ENCODE measurements at regions of chr10 and their contacts with region 1.

Region 1: GRCh38 chr10:64271983-64272382 is 750.8 kb downstream of the REEP3 start:
- DNase-seq: peak in 1 of 2 experiments; percentile 16
- H3K4me3 ChIP-seq: no peak overlapping the region
- H3K4me3 Mint-ChIP-seq: no peak overlapping the region
- H3K27ac Mint-ChIP-seq: no peak overlapping the region
- H3K4me1 ChIP-seq: no peaks in the 10 kb centered on the region
- H3K4me1 Mint-ChIP-seq: no peaks in the 10 kb centered on the region
- H3K27me3 ChIP-seq: no peaks in the 10 kb centered on the region
- H3K27me3 Mint-ChIP-seq: peaks cover 7% of the 10 kb centered on the region
- CTCF ChIP-seq: peak; percentile 42 to 46

Region 2: DNA sequence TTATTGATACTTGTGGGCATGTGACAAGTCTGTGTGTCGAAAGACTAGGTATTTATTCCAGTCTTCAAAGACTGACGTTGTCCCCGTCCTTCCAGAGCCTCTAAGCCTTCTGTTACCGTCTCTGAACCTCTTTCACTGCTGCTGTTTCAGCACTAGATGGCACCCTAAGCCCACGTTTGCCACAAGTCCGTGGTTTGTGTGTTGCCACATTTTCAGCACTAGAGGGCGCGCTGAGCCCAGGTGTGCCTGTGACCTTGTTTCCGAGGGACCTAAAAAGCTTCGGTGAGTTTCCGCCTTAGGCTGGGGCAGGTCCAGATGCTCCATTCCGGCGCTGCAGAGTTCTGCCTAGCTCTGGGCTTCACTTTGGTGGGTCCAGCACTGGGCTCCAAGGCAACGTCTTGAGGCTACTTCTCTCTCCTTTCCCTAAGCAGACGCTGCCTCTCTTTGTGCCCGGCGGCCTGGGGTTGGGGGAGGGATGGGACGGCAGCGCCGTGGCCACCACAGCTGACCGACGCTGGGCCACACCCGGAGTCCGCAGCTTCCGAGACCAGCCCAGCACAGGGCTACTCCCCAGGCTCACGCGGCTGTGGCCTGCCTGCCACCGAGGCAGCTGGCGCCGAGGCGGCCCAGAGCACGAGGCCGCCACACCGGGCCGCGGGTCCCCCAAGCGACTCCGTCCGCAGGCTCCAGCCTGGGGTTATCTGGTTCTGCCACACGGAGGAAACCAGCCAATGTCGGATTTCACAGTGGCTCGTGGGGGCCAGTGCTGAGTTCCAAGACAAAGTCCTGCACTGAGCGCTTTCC is 230.6 kb before region 1 on chr10:
- CTCF ChIA-PET with region 1: no interaction called
- POLR2A ChIA-PET with region 1: no interaction called
- intact Hi-C with region 1: no loop called
- DNase-seq: peak; percentile 84 to 90
- H3K4me3 ChIP-seq: no peak overlapping the region
- H3K4me3 Mint-ChIP-seq: no peak overlapping the region
- H3K27ac Mint-ChIP-seq: no peak overlapping the region
- H3K4me1 ChIP-seq: no peaks in the 10 kb centered on the region
- H3K4me1 Mint-ChIP-seq: no peaks in the 10 kb centered on the region
- H3K27me3 ChIP-seq: no peaks in the 10 kb centered on the region; the same call in 1 of the 2 replicates
- H3K27me3 Mint-ChIP-seq: peaks cover 6% of the 10 kb centered on the region
- CTCF ChIP-seq: peak; percentile 100

Region 3: DNA sequence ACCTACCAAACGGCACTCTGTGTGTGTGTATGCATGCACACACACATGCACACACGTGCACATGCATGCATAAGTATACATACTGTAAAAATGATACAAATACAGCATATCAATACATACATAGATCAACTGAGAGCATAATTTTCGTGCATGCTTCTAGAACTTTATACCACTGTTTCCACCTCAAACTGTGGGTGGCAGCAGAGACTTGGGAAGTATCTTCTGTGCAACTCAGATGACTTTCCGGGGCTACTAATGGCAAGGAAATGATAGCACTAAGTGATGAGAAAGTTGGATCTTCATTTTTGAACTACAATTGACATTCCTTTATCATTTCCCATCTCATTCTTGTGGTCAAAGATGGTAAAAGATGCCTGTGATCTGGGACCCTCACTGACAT is 180.1 kb before region 1 on chr10:
- CTCF ChIA-PET with region 1: no interaction called
- POLR2A ChIA-PET with region 1: no interaction called
- intact Hi-C with region 1: loop called (anchors 5 kb)
- DNase-seq: peak; percentile 48 to 53
- H3K4me3 ChIP-seq: no peak overlapping the region
- H3K4me3 Mint-ChIP-seq: no peak overlapping the region
- H3K27ac Mint-ChIP-seq: no peak overlapping the region
- H3K4me1 ChIP-seq: no peaks in the 10 kb centered on the region
- H3K4me1 Mint-ChIP-seq: no peaks in the 10 kb centered on the region
- H3K27me3 ChIP-seq: no peaks in the 10 kb centered on the region
- H3K27me3 Mint-ChIP-seq: no peaks in the 10 kb centered on the region
- CTCF ChIP-seq: peak; percentile 61 to 66